Esophagus muscularis mucosa (tissue), 4 donors: ENCODE measurements at regions of chr19 and their contacts with region 1.

Region 1: GRCh38 chr19:18521885-18522624 is at the start of gene ELL:
- DNase-seq: peak; percentile 100
- H3K4me3 ChIP-seq: peak within 1 kb of the TSS; percentile 91 to 99 (median 95)
- H3K27ac ChIP-seq: peak within 1 kb of the TSS; percentile 96 to 99 (median 98)
- H3K4me1 ChIP-seq: peaks cover 18 to 45% (median 32%) of the 10 kb centered on the region in 4 donors
- H3K27me3 ChIP-seq: no peaks in the 10 kb centered on the region
- CTCF ChIP-seq: peak in 2 of 3 experiments; percentile 6 to 26
- EP300 ChIP-seq: no peak
- POLR2A ChIP-seq: peak; percentile 98
- total RNA-seq, gene ELL: 9.1 to 35.1 (median 20.1) TPM

Region 2: DNA sequence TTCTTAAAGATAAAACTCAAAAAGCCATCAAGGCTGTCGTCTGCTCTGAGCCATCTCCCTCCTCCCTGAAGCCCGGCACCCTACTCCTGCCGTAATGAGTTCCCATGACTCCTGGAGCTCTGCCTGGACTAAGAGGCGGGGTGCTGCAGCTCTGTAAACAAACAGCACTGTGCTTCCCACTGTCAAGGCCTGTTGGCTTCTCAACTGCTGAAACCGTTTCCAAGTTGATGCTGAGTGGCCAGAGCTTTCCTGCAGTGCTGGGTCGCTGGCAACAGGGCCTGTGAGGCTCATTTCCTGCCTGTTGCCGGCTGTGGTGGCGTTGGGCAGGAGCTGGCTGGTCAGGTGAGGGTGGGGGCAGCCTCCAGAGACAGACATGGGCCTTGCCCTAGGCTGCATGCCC is 57.4 kb before region 1 on chr19:
- intact Hi-C with region 1: loop called (anchors 5 kb)
- DNase-seq: peak; percentile 96
- H3K4me3 ChIP-seq: no peak overlapping the region
- H3K27ac ChIP-seq: peak overlapping the region; percentile 77 to 91 (median 88)
- H3K4me1 ChIP-seq: peaks cover 81 to 97% (median 96%) of the 10 kb centered on the region in 4 donors
- H3K27me3 ChIP-seq: no peaks in the 10 kb centered on the region
- CTCF ChIP-seq: no peak
- EP300 ChIP-seq: no peak
- POLR2A ChIP-seq: no peak

Region 3: GRCh38 chr19:18478569-18479311 is 43.3 kb before region 1 on chr19:
- intact Hi-C with region 1: loop called (anchors 5 kb)
- DNase-seq: peak; percentile 96
- H3K4me3 ChIP-seq: no peak overlapping the region
- H3K27ac ChIP-seq: peak overlapping the region; percentile 81 to 88 (median 86)
- H3K4me1 ChIP-seq: peaks cover 60 to 97% (median 95%) of the 10 kb centered on the region in 4 donors
- H3K27me3 ChIP-seq: no peaks in the 10 kb centered on the region
- CTCF ChIP-seq: no peak
- EP300 ChIP-seq: peak; percentile 83
- POLR2A ChIP-seq: no peak

Region 4: DNA sequence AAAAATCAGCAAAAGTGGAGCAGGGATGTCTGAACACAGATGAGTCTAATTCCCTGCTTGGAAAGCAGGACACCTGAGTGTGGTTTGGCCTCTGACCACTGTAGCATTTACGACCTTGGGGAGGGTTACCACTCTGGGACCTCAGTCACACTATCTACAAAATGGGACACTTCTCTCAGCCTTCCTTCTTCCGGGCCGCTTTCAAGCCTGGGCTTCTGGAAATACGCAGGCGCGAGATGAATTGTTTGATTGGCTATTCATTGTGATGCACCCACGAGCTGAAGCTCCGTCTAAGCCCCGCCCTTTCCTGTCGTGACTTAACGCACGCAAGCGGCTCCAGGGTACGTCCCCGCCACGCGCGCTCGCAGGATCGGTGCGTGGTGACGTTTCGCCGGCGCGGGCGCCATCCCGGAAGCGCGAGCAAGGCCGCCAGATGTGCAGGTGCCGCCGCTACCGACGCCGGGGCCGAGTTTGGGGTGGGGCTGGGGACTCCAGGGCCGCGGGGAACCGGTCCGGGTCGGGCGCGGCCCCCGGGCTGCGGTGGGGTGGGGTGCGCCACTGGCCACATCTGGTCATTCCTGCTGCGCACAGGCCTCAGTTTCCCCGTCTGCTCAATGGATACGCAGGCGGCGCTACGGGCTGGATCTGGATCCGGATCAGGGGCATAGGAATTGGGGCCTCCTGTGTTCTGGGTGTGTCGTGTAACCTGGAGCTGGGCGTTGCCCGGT is 35.6 kb after region 1 on chr19 and contains the start of gene KXD1:
- intact Hi-C with region 1: loop called (anchors 5 kb)
- DNase-seq: peak; percentile 99
- H3K4me3 ChIP-seq: peak within 1 kb of the TSS; percentile 77 to 95 (median 92)
- H3K27ac ChIP-seq: peak within 1 kb of the TSS; percentile 94 to 99 (median 98)
- H3K4me1 ChIP-seq: peaks cover 8 to 43% (median 27%) of the 10 kb centered on the region in 4 donors
- H3K27me3 ChIP-seq: no peaks in the 10 kb centered on the region
- CTCF ChIP-seq: no peak
- EP300 ChIP-seq: peak; percentile 19
- POLR2A ChIP-seq: peak; percentile 77
- total RNA-seq, gene KXD1: 129 to 155 (median 149) TPM

Region 5: DNA sequence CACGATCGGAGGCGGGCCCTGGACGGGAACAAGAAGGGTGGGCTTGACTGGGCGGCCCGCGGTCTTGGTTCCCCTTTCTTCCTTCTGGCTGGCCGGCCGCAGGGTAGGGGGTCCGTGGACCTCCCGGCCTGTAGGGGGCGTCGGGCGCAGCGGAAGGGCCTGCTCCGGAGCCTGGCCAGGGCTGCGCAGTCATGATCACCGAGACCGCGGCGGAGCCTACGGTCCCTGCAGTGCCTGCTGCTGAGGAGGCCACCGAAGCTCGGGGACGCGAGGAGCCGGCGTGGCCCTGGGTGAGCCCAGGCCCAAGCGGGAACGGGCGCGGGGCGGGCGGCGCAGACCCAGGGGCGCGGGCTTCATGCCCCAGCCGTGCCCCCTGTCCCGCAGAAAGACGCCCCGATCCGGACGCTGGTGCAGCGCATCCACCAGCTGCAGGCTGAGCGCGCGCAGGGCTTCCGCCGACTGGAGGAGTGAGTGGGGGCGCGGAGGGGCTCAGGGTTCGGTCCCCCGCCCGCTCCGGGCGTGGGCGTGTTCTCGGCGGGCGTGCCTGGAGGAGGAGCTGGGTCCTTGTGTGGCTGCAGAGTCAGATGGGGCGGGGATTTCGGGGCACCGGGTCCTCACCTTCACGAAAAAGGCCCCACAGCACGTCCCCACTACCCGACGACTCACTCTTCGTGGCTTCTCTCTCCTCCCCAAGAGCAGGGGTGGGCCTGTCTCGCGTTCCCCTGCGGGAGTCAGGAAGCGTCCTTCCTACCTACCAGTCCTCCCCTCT is 66.7 kb after region 1 on chr19 and contains the start of gene REX1BD:
- intact Hi-C with region 1: no loop called
- DNase-seq: peak; percentile 96
- H3K4me3 ChIP-seq: peak within 1 kb of the TSS; percentile 68 to 96 (median 86)
- H3K27ac ChIP-seq: peak within 1 kb of the TSS; percentile 78 to 89 (median 86)
- H3K4me1 ChIP-seq: peaks cover 14 to 38% (median 31%) of the 10 kb centered on the region in 4 donors
- H3K27me3 ChIP-seq: no peaks in the 10 kb centered on the region
- CTCF ChIP-seq: peak; percentile 76 to 87 (median 79)
- EP300 ChIP-seq: no peak
- POLR2A ChIP-seq: no peak
- total RNA-seq, gene REX1BD: 56.1 to 77.7 (median 67.0) TPM